Activated CD8-positive, alpha-beta T cell treated with anti-CD3 and anti-CD28 coated beads for 36 hours (primary cell): ENCODE measurements at regions of chr11 and their contacts with region 1.

Region 1: DNA sequence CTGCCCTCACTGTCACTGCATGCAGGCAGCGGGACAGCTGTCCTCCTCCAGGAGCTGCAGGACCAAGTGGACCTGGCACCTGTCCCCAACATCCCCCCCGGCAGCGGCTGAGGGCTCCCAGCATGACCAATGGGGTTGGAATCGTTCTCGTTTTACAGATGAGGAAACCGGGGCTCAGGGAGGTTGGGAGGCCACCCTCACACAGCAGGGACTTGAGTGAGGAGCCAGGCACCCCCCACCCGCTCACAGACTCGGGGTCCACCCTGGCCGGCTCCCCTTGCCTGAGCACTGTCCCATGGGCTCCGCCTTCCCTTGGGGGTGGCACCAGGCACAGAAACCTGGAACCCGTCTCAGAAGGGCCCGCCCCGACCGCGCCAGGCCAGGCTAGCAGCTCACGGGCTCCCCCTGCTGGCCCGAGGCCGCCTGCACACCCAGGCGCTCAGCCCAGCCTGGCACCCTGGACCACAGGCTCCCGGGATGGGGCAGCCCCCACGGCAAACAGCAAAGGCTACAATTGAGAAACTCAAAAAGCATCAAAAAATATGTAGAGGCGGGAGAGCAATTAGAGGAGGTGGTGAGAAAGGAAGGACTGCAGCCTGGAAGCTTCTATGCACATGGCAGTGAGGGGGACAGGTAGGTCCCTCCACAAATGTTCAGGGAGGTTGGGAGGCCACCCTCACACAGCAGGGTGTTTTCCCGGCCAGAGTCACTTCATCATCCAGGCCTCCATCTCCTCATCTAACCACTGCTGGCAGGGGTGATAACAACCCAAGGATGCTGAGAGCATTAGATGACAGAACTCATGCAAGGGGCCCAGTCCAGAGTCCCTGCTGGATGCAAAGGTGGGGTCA is 12.8 kb downstream of the MACROD1 start:
- DNase-seq: peak; percentile 77
- ATAC-seq: peak; percentile 98
- H3K4me3 Mint-ChIP-seq: no peak overlapping the region
- H3K27ac Mint-ChIP-seq: no peak overlapping the region
- H3K4me1 Mint-ChIP-seq: peaks cover 4% of the 10 kb centered on the region
- H3K27me3 Mint-ChIP-seq: no peaks in the 10 kb centered on the region
- CTCF ChIP-seq: peak; percentile 99

Region 2: DNA sequence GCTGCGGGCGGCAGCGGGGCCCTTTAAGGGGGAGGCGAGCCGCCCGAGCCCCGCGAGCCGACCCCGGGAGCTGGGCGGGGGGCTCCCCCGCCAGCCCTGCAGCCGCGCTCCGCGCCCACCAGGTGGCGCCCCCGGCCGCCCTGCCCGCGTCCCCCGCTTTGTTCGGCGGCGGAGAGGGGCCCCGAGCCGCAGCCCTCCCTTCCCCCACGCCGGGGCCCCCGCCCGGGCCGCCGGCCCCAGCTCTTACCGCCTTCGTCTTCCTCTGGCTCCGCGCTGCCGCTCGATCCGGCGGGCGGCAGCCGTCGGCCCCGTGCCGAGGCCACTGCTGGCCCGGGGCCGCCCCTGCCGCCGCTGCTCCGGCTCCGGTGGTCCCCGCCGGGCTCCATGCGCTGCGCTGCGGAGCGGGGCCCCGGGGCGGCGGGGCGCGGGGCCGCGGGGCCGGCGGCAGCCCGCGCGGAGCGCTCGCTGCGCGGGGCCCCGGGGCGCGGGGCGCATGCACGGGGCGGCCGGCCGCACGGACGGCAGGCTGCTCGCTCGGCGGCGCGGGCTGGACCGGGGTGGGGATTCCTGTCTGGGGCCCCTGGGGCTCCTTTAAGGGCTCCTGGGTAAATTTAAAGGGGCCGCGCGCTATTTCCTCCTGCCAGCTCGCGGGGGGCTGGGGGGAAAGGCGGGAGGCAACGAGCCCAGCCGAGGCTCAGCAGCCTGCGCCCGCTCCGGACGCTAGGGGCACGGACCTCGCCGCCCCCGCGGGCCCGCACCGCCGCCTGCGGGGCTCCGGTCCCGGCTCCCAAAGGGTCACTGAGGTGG is 384.6 kb before region 1 on chr11 and contains the start of gene ZFTA:
- CTCF ChIA-PET with region 1: interaction called, 10 read pairs
- POLR2A ChIA-PET with region 1: no interaction called
- intact Hi-C with region 1: no loop called
- DNase-seq: peak; percentile 71
- ATAC-seq: peak; percentile 72
- H3K4me3 Mint-ChIP-seq: peak within 1 kb of the TSS; percentile 82
- H3K27ac Mint-ChIP-seq: peak within 1 kb of the TSS; percentile 44
- H3K4me1 Mint-ChIP-seq: peaks cover 10% of the 10 kb centered on the region
- H3K27me3 Mint-ChIP-seq: peaks cover 8% of the 10 kb centered on the region
- CTCF ChIP-seq: peak; percentile 72
- total RNA-seq, gene ZFTA: 4.1 to 4.3 TPM

Region 3: GRCh38 chr11:64165849-64166635 is 13.0 kb after region 1 on chr11 and contains the start of gene MACROD1:
- CTCF ChIA-PET with region 1: interaction called, 11 read pairs
- POLR2A ChIA-PET with region 1: interaction called, 6 read pairs
- intact Hi-C with region 1: no loop called
- DNase-seq: peak; percentile 92
- ATAC-seq: peak; percentile 93
- H3K4me3 Mint-ChIP-seq: peak within 1 kb of the TSS; percentile 84
- H3K27ac Mint-ChIP-seq: peak within 1 kb of the TSS; percentile 86
- H3K4me1 Mint-ChIP-seq: peaks cover 18% of the 10 kb centered on the region
- H3K27me3 Mint-ChIP-seq: no peaks in the 10 kb centered on the region
- CTCF ChIP-seq: no peak
- total RNA-seq, gene MACROD1: 38.7 to 38.8 TPM

Region 4: GRCh38 chr11:64285885-64286815 is 133.1 kb after region 1 on chr11:
- CTCF ChIA-PET with region 1: no interaction called
- POLR2A ChIA-PET with region 1: no interaction called
- intact Hi-C with region 1: no loop called
- DNase-seq: peak; percentile 49
- ATAC-seq: no peak
- H3K4me3 Mint-ChIP-seq: peak overlapping the region; percentile 80
- H3K27ac Mint-ChIP-seq: peak overlapping the region; percentile 55
- H3K4me1 Mint-ChIP-seq: peaks cover 18% of the 10 kb centered on the region
- H3K27me3 Mint-ChIP-seq: peaks cover 9% of the 10 kb centered on the region
- CTCF ChIP-seq: peak; percentile 17